Cardiac septum (tissue), 1 donor: ENCODE measurements at regions of chr6 and their contacts with region 1.

Region 1: DNA sequence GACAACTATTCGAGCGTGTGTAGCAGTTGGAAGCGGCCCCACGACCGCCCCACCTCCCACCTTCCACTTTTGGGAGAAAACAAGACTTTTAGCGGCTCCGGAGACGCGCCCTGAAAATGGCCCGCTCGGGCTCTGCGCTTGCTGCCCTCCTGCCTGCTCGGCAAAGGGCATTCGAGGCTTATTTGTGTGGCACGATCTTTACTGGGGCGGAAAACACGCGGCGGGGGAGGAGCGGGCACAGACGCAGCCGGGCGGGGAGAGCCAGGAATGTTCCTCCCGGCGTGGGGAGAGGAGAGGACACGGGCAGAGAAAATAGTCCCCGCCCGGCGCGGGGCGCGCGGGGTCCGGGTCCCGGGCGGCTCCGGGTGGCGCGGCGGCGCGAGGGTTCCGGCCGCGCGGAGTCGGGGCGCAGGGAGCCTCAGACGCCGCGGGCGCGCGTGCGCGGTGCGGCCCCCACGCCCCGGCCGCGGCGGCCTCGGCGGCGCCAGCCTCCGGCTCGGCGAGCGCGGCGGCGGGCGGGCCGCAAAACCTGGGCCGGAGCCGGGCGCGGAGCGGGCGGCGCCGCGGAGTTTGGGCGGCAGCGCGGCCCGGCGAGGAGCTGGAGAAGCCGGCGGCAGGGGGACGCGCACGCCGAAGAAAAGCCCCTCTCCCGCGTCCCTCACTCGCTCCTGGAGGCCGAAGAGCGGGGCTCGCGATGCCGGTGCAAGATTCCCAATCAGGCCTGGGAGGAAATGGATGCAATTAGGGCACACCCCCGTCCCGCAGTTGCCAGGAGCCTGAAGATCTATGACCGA is 90.0 kb upstream of the ARID1B start:
- DNase-seq: peak; percentile 93

Region 2: GRCh38 chr6:156658186-156658966 is 28.8 kb before region 1 on chr6:
- intact Hi-C with region 1: loop called (anchors 1 kb)
- DNase-seq: no peak

Region 3: GRCh38 chr6:156776840-156777576 is 89.8 kb after region 1 on chr6 and contains the start of gene ARID1B:
- intact Hi-C with region 1: loop called (anchors 1 kb)
- DNase-seq: peak; percentile 90
- total RNA-seq, gene ARID1B: 61.1 TPM

Region 4: DNA sequence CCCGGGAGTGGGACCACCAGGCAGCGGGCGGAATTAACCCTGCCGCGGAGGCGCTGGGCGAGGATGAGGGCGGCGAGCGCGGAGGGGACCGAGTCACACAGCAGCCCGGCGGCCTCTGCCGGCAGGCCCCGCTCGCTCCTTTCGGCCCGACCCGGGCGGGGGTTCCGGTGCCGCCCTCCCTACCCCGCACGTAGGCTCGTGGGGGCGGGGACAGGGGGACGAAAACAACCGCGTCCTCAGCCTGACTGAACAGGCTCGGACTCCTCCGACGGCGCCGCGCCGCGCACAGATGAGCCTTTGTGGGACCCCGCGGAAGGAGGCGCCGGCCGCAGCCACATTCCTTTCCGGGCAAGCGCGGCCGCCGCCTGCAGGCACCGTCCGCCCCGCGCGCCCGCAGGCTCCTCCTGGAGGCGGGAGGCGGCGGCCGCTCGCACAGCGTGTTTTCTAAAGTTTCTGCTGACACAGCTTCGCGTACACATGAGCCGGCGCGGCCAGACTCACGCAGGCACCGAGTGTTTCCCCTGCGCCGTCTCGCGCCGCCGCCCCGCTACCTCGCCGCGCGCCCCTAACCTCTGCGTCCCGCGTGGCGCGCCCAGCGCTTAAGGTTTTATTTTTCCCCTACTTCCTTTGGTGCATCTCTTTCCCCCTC is 334.3 kb after region 1 on chr6:
- intact Hi-C with region 1: loop called (anchors 2 kb)
- DNase-seq: peak; percentile 96